ENCODE measurements at regions of chr12 and their contacts with region 1.

Region 1: DNA sequence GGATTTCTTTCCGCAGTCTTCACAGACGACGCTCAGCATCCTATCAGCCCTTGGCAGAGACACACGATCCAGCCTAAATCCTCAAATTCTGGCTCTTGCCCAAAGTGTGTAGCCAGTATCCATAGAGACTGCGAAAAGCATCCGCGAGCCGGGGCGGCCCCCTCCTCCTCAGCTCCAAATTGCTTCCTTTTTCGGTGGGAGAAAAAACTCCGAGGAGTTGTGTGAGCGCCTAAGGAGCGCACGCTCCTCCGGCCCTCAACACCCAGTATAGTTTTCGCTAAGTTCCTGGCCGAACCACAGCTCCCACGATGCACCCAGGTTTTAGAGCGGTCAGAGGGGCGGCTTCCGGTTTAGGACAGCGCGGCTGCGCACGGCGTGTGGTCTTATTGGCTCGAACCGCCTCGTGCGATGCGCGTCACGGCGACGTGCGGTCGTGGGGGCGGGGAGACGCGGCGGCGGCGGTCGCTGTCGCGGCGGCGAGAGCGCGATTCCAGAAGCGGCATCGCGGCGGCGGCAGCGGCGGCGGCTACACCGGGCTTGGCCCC is at the start of gene ADIPOR2:
- DNase-seq: peak; percentile 95
- H3K4me3 Mint-ChIP-seq: peak within 1 kb of the TSS; percentile 97
- H3K27ac Mint-ChIP-seq: peak within 1 kb of the TSS; percentile 97
- H3K4me1 Mint-ChIP-seq: peaks cover 48% of the 10 kb centered on the region
- H3K27me3 Mint-ChIP-seq: no peaks in the 10 kb centered on the region
- total RNA-seq, gene ADIPOR2: 31.1 to 34.8 TPM

Region 2: GRCh38 chr12:1661553-1662335 is 28.9 kb before region 1 on chr12:
- CTCF ChIA-PET with region 1: no interaction called
- intact Hi-C with region 1: loop called (anchors 1 kb)
- DNase-seq: peak; percentile 88
- H3K4me3 Mint-ChIP-seq: peak overlapping the region; percentile 71
- H3K27ac Mint-ChIP-seq: peak overlapping the region; percentile 61
- H3K4me1 Mint-ChIP-seq: peaks cover 33% of the 10 kb centered on the region
- H3K27me3 Mint-ChIP-seq: no peaks in the 10 kb centered on the region

Region 3: GRCh38 chr12:1706633-1706981 is 16.0 kb after region 1 on chr12:
- CTCF ChIA-PET with region 1: interaction called, 4 read pairs
- intact Hi-C with region 1: loop called (anchors 2 kb)
- DNase-seq: peak; percentile 9
- H3K4me3 Mint-ChIP-seq: no peak overlapping the region
- H3K27ac Mint-ChIP-seq: no peak overlapping the region
- H3K4me1 Mint-ChIP-seq: peaks cover 59% of the 10 kb centered on the region
- H3K27me3 Mint-ChIP-seq: no peaks in the 10 kb centered on the region

Region 4: DNA sequence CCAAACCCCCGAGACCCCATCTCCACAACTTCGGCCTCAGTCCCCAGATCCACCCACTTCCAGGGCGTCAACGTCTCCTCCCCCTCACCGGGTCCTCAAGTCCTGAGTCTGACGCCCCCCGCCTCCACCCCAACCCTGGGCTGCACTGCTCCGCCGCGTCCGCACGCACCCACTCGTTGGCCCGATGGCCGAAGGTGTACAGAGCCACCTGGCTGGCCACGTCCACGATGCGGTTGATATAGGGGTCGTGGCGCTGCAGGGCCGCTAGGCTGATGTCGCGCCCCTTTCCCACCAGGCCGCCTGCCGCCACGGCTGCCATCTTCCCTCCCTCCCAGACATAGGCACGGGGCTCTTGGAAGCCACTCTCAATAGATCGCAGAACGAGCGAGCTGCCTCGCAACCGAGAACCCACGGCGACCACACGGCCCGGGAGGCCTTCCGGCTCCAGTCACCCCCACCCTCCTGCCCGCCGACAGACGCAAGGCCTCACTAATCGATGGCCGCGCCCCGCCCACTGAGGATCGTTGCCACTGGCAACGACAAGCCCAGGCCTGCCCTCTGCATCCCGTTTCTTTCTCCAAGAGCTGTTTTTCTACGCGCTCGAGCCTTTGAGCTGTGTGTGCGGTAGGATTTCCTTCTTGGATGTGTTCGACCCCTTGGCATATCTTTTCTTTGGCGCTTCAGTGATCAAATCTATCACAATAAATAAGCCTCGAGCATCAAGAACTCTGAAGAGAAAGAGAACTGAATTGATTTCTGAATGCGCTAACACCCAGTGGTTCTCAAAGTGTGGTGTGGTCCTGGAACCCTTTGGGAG is 313.7 kb after region 1 on chr12 and contains the start of gene DCP1B:
- CTCF ChIA-PET with region 1: no interaction called
- intact Hi-C with region 1: loop called (anchors 2 kb)
- DNase-seq: peak; percentile 98
- H3K4me3 Mint-ChIP-seq: peak within 1 kb of the TSS; percentile 88
- H3K27ac Mint-ChIP-seq: peak within 1 kb of the TSS; percentile 96
- H3K4me1 Mint-ChIP-seq: peaks cover 23% of the 10 kb centered on the region
- H3K27me3 Mint-ChIP-seq: no peaks in the 10 kb centered on the region
- total RNA-seq, gene DCP1B: 13.1 to 13.5 TPM

Region 5: DNA sequence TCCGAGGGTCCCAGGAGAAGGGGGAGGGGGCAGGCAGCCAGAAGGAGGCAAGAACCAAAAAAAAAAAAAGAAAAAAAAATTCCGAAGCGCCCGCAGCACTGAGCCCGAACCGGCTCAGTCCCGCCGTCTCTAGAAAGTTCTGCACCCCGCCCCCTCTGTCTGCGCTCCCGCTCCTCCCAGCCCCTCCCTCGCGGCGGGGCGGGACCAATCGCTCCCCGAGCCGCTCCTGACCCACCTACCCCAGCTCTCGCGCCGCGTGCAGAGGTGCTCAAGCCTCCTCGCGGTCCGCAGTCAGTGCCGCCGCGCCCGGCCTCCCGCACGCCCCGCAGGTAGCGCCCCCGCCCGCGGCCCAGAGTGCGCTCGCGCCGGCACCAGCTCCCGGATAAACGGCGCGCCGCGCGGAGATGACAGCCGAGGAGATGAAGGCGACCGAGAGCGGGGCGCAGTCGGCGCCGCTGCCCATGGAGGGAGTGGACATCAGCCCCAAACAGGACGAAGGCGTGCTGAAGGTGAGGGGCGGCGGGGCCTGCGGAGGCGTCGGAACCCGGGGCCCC is 1104.2 kb after region 1 on chr12 and contains the start of gene FKBP4:
- CTCF ChIA-PET with region 1: no interaction called
- intact Hi-C with region 1: loop called (anchors 10 kb)
- DNase-seq: peak; percentile 91
- H3K4me3 Mint-ChIP-seq: peak within 1 kb of the TSS; percentile 88
- H3K27ac Mint-ChIP-seq: peak within 1 kb of the TSS; percentile 68
- H3K4me1 Mint-ChIP-seq: peaks cover 26% of the 10 kb centered on the region
- H3K27me3 Mint-ChIP-seq: no peaks in the 10 kb centered on the region
- total RNA-seq, gene FKBP4: 139 TPM

Measured in activated naive CD4-positive, alpha-beta T cell treated with anti-CD3 and anti-CD28 coated beads for 36 hours (primary cell).